Left colon (tissue), 2 donors: ENCODE measurements at regions of chr11 and their contacts with region 1.

Region 1: DNA sequence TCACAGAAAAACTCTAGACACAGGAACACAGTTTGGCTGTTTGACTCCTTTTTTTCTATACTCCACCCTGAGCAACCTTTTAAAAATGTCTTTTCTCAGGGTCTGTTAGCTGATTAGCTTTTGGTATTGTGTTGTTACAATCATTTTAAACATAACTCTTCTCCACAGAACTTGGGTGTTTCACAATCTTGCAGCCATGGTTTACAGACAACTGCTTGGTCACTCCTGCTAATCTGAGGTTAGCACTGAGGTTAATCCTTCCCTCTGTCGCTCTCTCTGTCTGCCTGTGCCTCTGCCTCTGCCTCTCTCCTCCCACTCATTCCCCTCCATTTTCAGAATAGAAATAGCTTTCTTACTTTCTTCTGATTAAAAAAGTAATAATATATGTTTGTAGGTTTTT is 62.4 kb upstream of the ZBED5 start:
- DNase-seq: no peak
- ATAC-seq: no peak

Region 2: DNA sequence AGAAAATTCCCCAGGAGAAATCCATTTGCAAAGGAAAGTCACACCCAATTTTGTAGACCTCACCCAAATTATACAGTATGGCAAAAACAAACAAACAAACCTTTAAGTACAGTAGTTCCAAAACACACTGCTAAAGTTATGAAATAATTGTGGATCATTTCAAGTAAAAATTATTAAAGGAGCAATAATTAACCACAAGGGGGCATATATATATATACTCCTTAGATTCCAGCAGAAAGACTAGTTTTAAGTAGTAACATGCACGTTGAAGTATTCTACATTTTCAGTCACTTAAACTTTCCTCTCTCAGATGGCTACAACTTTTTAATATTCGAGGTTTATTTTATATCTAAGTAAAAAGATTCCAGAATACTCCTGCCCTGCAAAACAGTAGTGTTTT is 406.0 kb before region 1 on chr11:
- intact Hi-C with region 1: no loop called
- DNase-seq: no peak
- ATAC-seq: no peak

Region 3: GRCh38 chr11:10866893-10867331 is 53.3 kb before region 1 on chr11:
- intact Hi-C with region 1: loop called in 1 of 2 experiments (anchors 10 kb)
- DNase-seq: no peak
- ATAC-seq: no peak

Region 4: GRCh38 chr11:11265994-11266606 is 345.9 kb after region 1 on chr11:
- intact Hi-C with region 1: no loop called
- DNase-seq: peak in 1 of 2 donors; percentile 68
- ATAC-seq: peak; percentile 80